ENCODE measurements at regions of chr6 and their contacts with region 1.

Region 1: DNA sequence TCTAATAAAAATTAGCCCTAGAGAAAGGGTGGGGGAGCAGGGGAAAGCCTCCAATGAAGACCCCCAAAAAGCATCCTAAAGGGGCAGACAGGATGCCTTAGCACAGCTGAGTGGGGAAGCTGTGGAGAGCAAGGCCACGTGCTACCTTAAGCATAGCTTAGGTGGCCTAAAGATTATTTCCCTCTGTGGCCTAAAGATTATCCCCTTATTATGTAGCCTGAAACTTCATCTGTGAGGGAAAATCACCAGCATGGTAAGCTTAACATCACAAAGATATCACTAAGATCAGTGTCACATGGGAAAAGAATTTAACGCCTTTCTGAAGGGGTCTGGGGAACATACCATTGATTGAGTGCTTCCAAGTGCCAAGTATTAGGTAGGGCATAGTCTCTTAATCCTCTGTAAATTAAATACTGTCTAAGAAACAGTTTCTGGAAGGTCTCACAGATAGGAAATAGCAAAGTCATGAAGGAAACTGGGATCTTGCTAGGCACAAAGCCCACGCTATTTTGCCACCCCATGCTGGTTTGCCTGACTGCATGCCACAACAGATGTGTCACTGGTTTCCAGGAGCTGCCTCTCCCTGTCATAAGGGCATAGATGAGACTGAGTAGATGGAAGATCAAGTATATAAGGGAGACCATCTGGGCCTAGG is 170.0 kb downstream of the HACE1 start:
- DNase-seq: no peak
- H3K4me3 Mint-ChIP-seq: no peak overlapping the region
- H3K27ac Mint-ChIP-seq: no peak overlapping the region
- H3K4me1 Mint-ChIP-seq: peaks cover 26% of the 10 kb centered on the region
- H3K27me3 Mint-ChIP-seq: no peaks in the 10 kb centered on the region

Region 2: GRCh38 chr6:104705095-104705707 is 15.5 kb after region 1 on chr6:
- CTCF ChIA-PET with region 1: no interaction called
- intact Hi-C with region 1: loop called (anchors 1 kb)
- DNase-seq: peak; percentile 55
- H3K4me3 Mint-ChIP-seq: peak overlapping the region; percentile 38
- H3K27ac Mint-ChIP-seq: no peak overlapping the region
- H3K4me1 Mint-ChIP-seq: peaks cover 32% of the 10 kb centered on the region
- H3K27me3 Mint-ChIP-seq: no peaks in the 10 kb centered on the region

Region 3: DNA sequence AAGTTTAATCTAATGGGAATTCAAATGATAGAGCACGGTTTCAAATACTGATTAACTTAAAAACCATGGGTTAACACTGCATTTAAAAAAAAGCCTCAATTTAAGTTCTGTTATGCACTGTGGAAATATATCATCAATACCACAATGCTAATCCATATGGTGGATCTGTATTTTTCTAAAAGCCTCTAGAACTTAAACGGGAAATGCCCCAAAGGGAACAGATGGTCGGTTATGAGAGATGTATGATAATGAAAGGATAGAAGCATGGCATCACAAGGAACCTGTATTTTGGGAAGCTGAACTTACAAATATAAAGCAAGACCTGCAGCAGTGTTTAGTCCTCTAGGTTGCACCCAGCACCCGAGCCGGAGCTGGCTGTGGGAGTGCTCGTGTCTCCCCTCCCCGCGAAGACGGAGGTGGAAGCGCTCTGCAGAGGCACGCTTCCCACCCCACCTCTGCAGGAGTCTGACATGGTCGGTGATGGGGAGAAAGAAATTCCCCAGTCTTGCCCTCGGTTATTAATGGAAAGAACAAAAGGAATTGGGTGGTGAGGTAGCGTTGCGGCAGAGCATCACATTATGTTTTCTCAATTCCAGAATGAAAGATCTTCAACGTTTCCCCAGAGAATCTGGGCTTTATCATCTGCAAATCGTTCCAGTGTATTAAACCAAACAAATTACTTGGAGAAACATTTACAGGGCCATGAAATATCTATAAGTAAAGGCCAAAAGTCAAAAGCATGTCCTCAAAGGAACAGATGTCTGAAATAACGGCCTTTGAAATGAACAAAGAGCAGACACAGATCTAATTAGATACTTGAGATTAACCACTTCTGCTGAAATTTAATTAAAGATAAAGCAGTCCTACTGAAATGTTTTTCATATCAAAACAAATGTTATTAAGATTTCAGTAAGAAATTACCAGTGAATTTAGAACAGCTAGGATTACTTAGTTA is 593.2 kb after region 1 on chr6:
- CTCF ChIA-PET with region 1: no interaction called
- intact Hi-C with region 1: no loop called
- DNase-seq: no peak
- H3K4me3 Mint-ChIP-seq: no peak overlapping the region
- H3K27ac Mint-ChIP-seq: no peak overlapping the region
- H3K4me1 Mint-ChIP-seq: no peaks in the 10 kb centered on the region
- H3K27me3 Mint-ChIP-seq: no peaks in the 10 kb centered on the region

Measured in activated naive CD4-positive, alpha-beta T cell treated with anti-CD3 and anti-CD28 coated beads for 36 hours (primary cell).